WTC11 (cell line): ENCODE measurements at regions of chr19 and their contacts with region 1.

Region 1: DNA sequence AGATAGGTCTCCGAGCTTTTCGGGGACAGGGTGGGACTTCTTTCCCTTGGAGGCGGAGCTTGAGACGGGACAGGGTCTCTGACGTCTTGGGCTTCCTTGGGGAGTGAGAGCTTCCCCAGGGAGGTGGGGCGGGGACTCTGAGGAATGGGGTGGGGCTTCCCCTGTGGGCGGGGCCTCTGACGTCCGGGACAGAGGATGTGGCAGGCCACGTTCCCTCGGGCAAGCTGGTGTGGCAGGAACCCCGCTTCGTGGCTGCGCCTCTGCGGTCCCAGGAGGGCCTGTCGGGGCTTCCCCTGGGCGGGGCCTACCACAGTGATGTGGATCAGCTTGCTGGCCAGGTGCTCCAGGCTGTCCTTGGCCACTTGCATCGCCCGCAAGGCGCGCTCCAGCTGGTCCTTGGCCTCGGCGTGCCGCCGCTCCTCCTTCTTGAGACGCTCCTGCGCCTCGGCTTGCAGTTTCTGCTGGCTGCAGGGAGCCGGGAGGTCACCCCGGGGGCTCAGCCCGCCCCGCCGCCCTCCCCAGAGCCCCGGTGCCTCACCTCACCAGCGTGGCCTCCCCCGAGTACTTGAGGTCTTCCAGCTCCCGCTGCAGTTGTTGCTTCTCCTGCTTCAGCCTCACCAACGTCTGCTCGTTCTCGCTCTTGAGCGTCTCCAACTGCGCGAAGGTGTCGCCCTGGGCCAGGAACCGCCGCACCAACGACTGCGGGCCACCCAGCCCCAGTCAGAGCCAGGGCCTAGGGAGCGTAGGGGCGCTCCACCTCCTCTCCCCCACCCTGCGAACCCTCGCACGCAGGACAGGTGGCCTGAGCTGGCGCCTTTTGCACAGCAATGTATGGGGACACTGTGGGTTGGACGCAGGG is 3.3 kb upstream of the RGL3 start:
- DNase-seq: peak; percentile 99
- ATAC-seq: peak; percentile 70
- H3K4me3 Mint-ChIP-seq: peak overlapping the region; percentile 87
- H3K27ac Mint-ChIP-seq: peak overlapping the region; percentile 97
- H3K4me1 Mint-ChIP-seq: peaks cover 15% of the 10 kb centered on the region
- H3K27me3 Mint-ChIP-seq: peaks cover 29% of the 10 kb centered on the region
- CTCF ChIP-seq: no peak

Region 2: DNA sequence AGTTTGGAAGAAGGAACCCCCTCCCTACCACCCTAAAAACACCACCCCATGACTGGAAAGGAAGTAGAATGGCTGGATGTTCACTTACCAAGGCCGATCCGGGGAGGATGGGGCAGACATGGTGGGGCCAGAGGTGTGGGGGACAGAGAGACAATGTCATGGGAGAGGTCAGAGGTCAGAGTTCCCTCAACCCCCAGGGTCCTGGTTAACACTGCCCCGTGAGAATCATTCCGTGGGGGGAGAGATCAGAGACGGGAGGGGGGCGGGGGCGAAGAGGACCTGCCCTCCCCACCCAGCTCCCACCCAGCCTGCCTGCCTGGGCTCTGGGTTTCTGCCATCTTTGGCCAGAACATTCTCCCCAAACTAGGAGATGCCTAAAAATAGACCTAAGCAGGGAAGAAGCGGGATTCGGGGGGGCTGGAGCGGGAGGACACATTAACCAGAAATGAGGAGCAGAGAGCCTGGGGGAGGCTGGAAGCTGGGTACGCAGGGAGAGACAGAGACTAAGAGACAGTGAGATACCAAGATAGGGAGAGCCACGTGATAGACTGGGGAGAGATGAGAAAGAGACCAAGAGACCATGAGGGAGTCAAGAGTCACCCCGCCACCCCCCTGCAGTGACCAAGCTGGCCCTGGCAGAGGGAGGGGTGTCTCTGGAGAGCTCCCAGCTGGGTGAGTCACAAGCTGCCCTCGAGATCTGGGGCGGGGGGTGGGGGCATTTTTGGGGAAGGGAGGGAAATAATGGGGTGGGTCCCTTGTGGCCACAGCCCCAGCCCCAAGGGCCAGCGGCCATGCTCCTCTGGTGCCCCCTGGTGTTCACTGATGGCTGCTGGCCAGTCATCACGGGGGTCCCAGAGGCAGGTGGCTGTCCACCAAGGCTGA is 219.0 kb before region 1 on chr19:
- CTCF ChIA-PET with region 1: no interaction called
- POLR2A ChIA-PET with region 1: no interaction called
- DNase-seq: peak; percentile 81
- ATAC-seq: peak; percentile 87
- H3K4me3 Mint-ChIP-seq: no peak overlapping the region
- H3K27ac Mint-ChIP-seq: peak overlapping the region; percentile 45; the same call in 1 of the 2 replicates
- H3K4me1 Mint-ChIP-seq: 0 out of 2 replicates have a peak, but pooled peaks cover 3% of the 10 kb centered on the region
- H3K27me3 Mint-ChIP-seq: no peaks in the 10 kb centered on the region
- CTCF ChIP-seq: peak; percentile 70

Region 3: GRCh38 chr19:11242864-11243797 is 179.3 kb before region 1 on chr19:
- CTCF ChIA-PET with region 1: interaction called, 11 read pairs
- POLR2A ChIA-PET with region 1: no interaction called
- DNase-seq: peak; percentile 99
- ATAC-seq: peak; percentile 97
- H3K4me3 Mint-ChIP-seq: peak overlapping the region; percentile 61
- H3K27ac Mint-ChIP-seq: no peak overlapping the region
- H3K4me1 Mint-ChIP-seq: peaks cover 4% of the 10 kb centered on the region
- H3K27me3 Mint-ChIP-seq: no peaks in the 10 kb centered on the region
- CTCF ChIP-seq: peak; percentile 91

Region 4: GRCh38 chr19:11332822-11333221 is 89.6 kb before region 1 on chr19:
- CTCF ChIA-PET with region 1: no interaction called
- POLR2A ChIA-PET with region 1: no interaction called
- DNase-seq: no peak
- ATAC-seq: no peak
- H3K4me3 Mint-ChIP-seq: no peak overlapping the region
- H3K27ac Mint-ChIP-seq: no peak overlapping the region
- H3K4me1 Mint-ChIP-seq: no peaks in the 10 kb centered on the region
- H3K27me3 Mint-ChIP-seq: no peaks in the 10 kb centered on the region
- CTCF ChIP-seq: no peak

Region 5: DNA sequence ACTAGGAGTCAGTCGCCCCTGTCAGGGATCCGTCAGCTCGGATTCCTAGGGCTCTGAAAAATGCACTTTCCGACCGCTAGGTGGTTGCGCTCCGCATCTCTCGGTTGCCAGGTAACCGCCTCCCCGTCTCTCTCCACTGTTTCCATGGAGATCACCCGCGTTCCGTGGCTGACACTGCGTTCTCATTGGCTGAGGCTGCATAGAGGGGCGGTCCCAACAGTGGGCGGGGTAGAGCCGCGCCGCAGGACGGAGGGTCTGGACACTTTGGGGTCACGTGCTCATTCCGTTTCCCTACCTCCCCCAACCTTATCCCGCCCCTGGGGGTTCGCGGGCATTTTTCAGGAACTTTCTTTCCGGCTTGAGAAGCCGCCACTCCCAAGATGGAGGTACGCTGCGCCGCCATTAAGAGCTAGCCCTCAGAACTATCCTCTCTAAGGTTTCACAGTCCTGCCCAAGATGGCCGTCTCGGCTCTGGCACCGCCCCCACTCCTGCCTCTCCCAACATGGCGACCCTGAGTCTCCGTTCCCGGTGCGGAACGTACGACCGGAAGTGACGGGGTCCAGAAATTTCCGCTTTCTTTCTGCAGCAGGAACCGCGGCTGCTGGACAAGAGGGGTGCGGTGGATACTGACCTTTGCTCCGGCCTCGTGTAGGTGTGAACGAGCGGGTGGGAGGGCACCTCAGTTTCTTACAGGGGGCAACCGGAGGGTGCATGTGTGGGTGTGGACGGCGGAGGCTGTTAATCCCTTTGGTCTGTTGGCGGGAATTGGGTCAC is 12.9 kb after region 1 on chr19 and contains the starts of genes ODAD3 and PRKCSH:
- CTCF ChIA-PET with region 1: interaction called, 111 read pairs
- POLR2A ChIA-PET with region 1: interaction called, 14 read pairs
- DNase-seq: peak; percentile 99
- ATAC-seq: peak; percentile 91
- H3K4me3 Mint-ChIP-seq: peak within 1 kb of the TSS; percentile 96
- H3K27ac Mint-ChIP-seq: peak within 1 kb of the TSS; percentile 97
- H3K4me1 Mint-ChIP-seq: peaks cover 11% of the 10 kb centered on the region
- H3K27me3 Mint-ChIP-seq: no peaks in the 10 kb centered on the region
- CTCF ChIP-seq: peak; percentile 95
- total RNA-seq, gene ODAD3: 4.1 to 5.8 TPM (median 4.8 TPM) in 3 replicates
- total RNA-seq, gene PRKCSH: 396 to 405 TPM (median 402 TPM) in 3 replicates

Region 6: DNA sequence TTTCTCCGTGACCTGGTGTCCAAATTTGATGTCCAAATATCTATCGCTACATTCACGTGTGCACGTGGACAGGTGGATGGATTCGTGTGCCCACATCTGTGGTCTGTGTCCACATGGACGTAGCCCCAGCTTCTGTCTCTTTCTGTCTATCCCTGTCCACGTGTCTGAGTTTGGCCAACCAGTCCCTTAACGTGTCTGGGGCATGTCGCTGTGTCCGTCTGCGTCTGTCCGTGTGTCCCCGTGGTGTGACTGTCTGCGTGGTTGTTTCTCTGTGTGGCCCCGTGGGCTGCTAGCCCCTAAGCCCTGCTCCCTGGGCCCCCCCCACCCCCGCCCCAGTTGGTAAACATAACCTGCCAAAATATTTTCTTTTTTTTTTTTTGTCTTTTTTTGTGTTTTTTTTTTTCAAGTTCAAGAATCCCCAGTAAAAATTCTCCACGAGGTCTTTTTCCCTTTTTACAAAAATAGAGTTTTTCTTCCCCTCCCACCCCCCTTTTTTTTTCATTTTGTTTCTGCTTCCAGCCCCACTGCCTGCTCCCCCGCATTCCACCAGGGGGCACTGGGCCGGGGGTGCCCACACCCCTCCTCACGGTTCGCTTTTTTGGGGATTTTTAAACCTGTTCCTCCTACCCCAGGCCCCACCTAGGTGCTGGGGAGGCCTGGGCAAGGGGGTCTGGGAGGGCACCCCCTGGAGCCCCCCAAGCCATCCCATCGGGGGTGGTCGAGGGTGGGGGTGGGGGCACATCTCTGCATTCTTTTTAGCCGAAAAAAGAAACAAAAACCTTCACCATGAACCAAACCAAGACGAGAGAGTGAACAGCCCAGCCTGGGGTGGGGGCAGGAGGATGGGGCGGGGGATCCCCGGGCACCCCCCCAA is 31.3 kb after region 1 on chr19:
- CTCF ChIA-PET with region 1: interaction called, 25 read pairs
- POLR2A ChIA-PET with region 1: no interaction called
- DNase-seq: peak; percentile 64
- ATAC-seq: peak; percentile 49
- H3K4me3 Mint-ChIP-seq: no peak overlapping the region; the same call in 1 of the 2 replicates
- H3K27ac Mint-ChIP-seq: peak overlapping the region; percentile 93
- H3K4me1 Mint-ChIP-seq: peaks cover 28% of the 10 kb centered on the region
- H3K27me3 Mint-ChIP-seq: no peaks in the 10 kb centered on the region; the same call in 1 of the 2 replicates
- CTCF ChIP-seq: peak; percentile 46; the same call in 1 of the 2 replicates

Region 7: GRCh38 chr19:11519138-11519537 is 96.7 kb after region 1 on chr19:
- CTCF ChIA-PET with region 1: no interaction called
- POLR2A ChIA-PET with region 1: no interaction called
- DNase-seq: no peak
- ATAC-seq: no peak
- H3K4me3 Mint-ChIP-seq: no peak overlapping the region
- H3K27ac Mint-ChIP-seq: no peak overlapping the region
- H3K4me1 Mint-ChIP-seq: no peaks in the 10 kb centered on the region
- H3K27me3 Mint-ChIP-seq: no peaks in the 10 kb centered on the region
- CTCF ChIP-seq: no peak